ENCODE measurements at regions of chr2 and their contacts with region 1.

Region 1: DNA sequence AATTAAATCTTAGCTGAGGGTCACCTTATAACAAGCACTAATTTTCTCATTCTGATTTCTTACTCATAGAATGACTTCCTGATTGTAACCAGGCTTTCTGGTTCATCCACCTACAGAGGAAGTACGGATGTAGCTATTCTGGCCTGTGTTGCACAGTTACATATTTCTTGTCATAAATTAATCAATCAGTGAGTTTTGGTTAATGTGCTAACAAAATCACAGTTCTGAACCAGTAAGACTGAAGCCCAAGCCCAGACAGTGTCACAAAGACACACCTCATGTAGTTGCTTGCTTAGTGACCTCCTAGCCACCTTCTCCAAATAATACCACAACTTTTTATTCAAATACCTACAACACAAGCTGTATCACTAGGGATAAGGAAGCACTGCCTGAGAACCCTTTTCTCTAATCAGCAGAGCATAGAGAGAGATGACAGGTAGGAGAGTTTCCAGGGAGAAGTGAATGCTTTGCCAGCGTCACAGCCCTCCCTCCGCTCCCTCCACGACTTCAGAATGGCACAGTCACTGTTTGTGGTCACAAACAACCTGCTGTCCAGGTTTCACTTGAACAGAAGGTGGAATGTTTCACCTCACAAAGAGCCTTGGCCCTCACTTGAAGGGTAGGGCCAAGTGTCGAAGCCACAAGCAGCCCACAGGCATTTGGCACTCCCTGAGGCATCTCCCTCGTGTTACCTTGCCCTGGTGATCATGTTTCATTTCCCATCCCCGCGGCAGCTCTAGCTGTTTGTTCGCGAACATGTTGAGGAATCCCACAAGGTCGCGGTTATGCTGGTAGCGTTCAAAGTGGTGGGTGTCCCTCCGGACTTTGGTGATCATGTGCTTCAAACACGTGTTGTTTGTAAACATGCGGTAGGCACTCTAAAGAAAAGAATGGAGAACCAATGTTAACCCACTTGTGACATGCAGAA is 120.8 kb upstream of the STK17B start:
- DNase-seq: peak in 1 of 5 donors; percentile 53
- ATAC-seq: peak in 3 of 4 donors; percentile 45 to 76 (median 50)
- H3K4me3 ChIP-seq: no peak overlapping the region
- H3K27ac ChIP-seq: peak overlapping the region in 7 of 12 donors; percentile 31 to 79 (median 59)
- H3K4me1 ChIP-seq: peaks cover 0 to 58% (median 18%) of the 10 kb centered on the region in 12 donors
- H3K27me3 ChIP-seq: no peaks in the 10 kb centered on the region
- CTCF ChIP-seq: no peak
- POLR2A ChIP-seq: no peak

Region 2: DNA sequence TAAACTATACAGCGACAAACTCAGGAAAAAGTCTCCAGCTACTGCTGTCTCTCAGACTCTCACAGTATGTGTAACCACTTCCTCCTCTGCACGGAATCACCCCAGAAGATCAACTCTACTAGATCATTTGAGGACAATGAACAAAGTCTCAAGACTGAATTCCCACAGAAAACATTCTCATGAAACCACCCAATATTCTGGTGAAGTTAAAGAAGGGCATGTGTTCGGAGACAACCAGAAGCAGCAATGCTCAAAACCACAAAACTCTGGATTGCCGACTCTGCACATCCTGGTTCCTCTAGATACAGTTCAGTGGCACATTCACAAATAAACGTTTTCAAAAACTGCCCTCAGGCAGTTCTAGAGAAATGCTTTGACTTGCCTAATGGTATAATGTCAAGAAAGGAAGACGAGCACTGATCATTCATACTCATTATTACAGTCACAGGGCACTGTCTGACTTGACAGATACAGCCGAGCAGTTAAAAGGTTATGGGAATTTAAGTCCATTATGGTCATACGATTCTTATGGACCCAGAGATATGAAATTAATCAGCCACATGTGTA is 28.9 kb before region 1 on chr2:
- intact Hi-C with region 1: no loop called
- DNase-seq: no peak
- ATAC-seq: peak; percentile 52 to 82 (median 70)
- H3K4me3 ChIP-seq: no peak overlapping the region
- H3K27ac ChIP-seq: peak overlapping the region in 1 of 12 donors; percentile 83
- H3K4me1 ChIP-seq: peaks cover 0 to 67% (median 18%) of the 10 kb centered on the region in 12 donors
- H3K27me3 ChIP-seq: no peaks in the 10 kb centered on the region
- CTCF ChIP-seq: no peak
- POLR2A ChIP-seq: no peak

Region 3: DNA sequence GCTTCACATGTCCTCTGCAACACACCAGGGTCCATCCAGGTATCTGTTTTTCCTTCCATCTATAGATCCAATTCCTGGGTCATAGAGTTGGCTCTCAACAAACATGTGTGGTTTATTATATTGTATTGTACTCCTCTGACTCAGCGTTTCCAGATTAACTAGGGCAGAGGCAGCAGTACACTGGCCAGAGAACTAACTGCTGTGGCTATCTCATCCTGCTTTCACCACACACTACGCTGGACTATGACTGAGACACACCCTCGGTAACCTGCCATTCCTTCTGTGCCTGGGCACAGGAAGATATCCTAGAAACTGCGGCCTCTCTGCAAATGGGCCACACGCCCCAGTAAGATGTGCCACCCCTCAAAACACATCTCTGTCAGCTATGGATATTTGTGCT is 39.0 kb after region 1 on chr2:
- intact Hi-C with region 1: loop called in 6 of 10 experiments (anchors 5 kb)
- DNase-seq: peak in 4 of 5 donors; percentile 17 to 40 (median 32)
- ATAC-seq: peak; percentile 88 to 95 (median 94)
- H3K4me3 ChIP-seq: peak overlapping the region in 1 of 12 donors; percentile 4
- H3K27ac ChIP-seq: peak overlapping the region in 10 of 12 donors; percentile 22 to 73 (median 60)
- H3K4me1 ChIP-seq: peaks cover 4 to 76% (median 31%) of the 10 kb centered on the region in 12 donors
- H3K27me3 ChIP-seq: no peaks in the 10 kb centered on the region
- CTCF ChIP-seq: no peak
- POLR2A ChIP-seq: no peak

Region 4: GRCh38 chr2:196337208-196337953 is 45.2 kb after region 1 on chr2:
- intact Hi-C with region 1: loop called in 6 of 10 experiments (anchors 5 kb)
- DNase-seq: no peak
- ATAC-seq: peak in 1 of 4 donors; percentile 42
- H3K4me3 ChIP-seq: no peak overlapping the region
- H3K27ac ChIP-seq: no peak overlapping the region
- H3K4me1 ChIP-seq: peaks cover 0 to 50% (median 9%) of the 10 kb centered on the region in 12 donors
- H3K27me3 ChIP-seq: no peaks in the 10 kb centered on the region
- CTCF ChIP-seq: peak; percentile 17 to 62 (median 46)
- POLR2A ChIP-seq: no peak

Region 5: GRCh38 chr2:196361606-196362326 is 69.6 kb after region 1 on chr2:
- intact Hi-C with region 1: no loop called
- DNase-seq: peak in 3 of 5 donors; percentile 33 to 44 (median 33)
- ATAC-seq: peak; percentile 22 to 78 (median 76)
- H3K4me3 ChIP-seq: peak overlapping the region; percentile 6 to 58 (median 48)
- H3K27ac ChIP-seq: peak overlapping the region; percentile 19 to 76 (median 54)
- H3K4me1 ChIP-seq: peaks cover 0 to 34% (median 11%) of the 10 kb centered on the region in 12 donors
- H3K27me3 ChIP-seq: no peaks in the 10 kb centered on the region
- CTCF ChIP-seq: no peak
- POLR2A ChIP-seq: peak in 1 of 2 donors; percentile 28

Region 6: DNA sequence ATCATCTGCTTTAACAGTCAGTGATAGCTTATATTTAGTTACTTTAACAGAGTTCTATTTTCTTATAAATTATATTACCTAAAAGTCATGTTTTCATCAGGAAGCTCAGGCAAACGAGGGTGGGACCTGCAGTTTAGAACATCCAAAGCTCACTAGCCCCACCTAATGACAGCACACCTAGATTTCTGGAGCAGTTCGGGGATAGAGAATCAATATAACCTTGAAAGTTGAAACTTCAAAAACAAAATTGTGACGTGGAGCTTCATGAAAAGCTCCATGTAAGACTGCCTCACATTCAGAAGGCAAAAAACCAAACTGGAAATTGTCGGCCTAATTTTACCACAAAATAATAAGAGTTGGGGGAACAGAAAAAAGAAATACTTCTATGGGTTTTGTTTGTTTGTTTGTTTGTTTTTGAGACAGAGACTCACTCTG is 161.5 kb after region 1 on chr2:
- intact Hi-C with region 1: loop called in 6 of 10 experiments (anchors 2 to 5 kb)
- DNase-seq: peak in 3 of 5 donors; percentile 33 to 43 (median 42)
- ATAC-seq: peak; percentile 51 to 69 (median 58)
- H3K4me3 ChIP-seq: no peak overlapping the region
- H3K27ac ChIP-seq: peak overlapping the region in 1 of 12 donors; percentile 23
- H3K4me1 ChIP-seq: peaks cover 0 to 15% (median 0%) of the 10 kb centered on the region in 12 donors
- H3K27me3 ChIP-seq: peaks cover 0 to 8% (median 0%) of the 10 kb centered on the region in 9 donors
- CTCF ChIP-seq: peak; percentile 37 to 81 (median 68)
- POLR2A ChIP-seq: no peak

Region 7: DNA sequence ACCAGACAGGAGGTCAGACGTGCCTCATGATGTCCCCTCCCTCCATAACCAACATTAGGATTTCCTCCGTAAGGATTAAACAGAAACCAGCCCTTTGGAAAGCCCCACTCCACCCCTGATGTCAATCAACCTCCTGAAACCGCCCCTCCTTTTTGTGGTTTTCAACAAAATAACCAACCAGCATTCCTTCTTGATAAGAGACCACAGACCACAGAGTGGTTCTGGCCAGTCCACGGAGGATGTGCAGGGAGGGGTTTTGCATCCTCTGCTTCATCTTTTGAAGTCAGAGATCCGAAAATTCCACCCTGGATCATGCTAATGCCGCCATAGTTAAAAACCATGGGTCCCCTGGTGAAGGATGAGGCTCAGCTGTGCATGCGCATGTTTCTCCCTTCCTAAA is 167.4 kb after region 1 on chr2:
- intact Hi-C with region 1: loop called in 5 of 10 experiments (anchors 5 kb)
- DNase-seq: no peak
- ATAC-seq: no peak
- H3K4me3 ChIP-seq: no peak overlapping the region
- H3K27ac ChIP-seq: no peak overlapping the region
- H3K4me1 ChIP-seq: no peaks in the 10 kb centered on the region
- H3K27me3 ChIP-seq: peaks cover 0 to 8% (median 0%) of the 10 kb centered on the region in 9 donors
- CTCF ChIP-seq: no peak
- POLR2A ChIP-seq: no peak

Region 8: GRCh38 chr2:196750982-196751635 is 459.0 kb after region 1 on chr2:
- intact Hi-C with region 1: loop called in 6 of 10 experiments (anchors 5 to 10 kb)
- DNase-seq: peak in 4 of 5 donors; percentile 33 to 41 (median 37)
- ATAC-seq: peak in 3 of 4 donors; percentile 56 to 80 (median 71)
- H3K4me3 ChIP-seq: no peak overlapping the region
- H3K27ac ChIP-seq: no peak overlapping the region
- H3K4me1 ChIP-seq: peaks cover 0 to 3% (median 0%) of the 10 kb centered on the region in 12 donors
- H3K27me3 ChIP-seq: no peaks in the 10 kb centered on the region
- CTCF ChIP-seq: peak; percentile 59 to 89 (median 72)
- POLR2A ChIP-seq: no peak

Region 9: DNA sequence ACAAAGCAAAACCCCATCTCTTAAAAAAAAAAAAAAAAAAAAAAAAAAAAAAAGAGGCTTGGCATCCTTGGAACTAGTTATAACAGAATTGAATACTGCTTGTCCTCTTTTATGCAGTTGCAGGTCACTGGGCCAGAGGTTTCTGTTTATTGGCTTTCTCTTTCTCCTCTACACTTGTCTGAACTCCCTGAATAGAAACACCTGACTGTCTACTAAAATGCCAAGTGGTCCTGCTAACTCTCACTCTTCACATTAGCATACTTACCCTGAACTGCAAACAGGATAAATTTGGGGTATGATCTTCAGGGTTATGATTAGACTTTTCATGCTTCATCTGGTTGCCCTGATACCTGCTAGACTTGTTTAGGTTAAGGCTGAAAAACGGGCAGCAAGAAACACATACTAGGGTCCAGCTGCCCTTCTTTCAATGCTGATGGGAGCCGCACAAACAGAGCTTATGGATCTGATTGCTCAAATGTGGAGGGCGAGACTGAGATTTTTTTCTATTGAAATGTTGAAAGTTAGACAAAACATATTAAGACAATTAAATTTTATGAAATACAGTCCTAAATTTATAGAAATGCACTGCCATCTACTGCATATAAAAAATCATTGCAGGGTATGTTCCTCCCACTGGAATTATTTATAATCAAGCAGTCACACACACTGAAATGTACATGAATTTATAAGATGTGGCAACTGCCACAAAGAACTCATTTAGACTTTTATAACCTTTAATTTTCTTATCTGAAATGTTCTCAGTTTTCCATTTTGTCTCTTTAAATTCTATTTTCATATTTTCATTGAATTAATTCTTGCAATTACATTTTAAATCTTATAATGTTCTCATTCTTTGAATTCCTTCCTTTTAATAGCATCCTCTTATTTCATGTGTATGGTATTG is 466.6 kb after region 1 on chr2:
- intact Hi-C with region 1: loop called in 7 of 10 experiments (anchors 5 to 10 kb)
- DNase-seq: no peak
- ATAC-seq: peak in 3 of 4 donors; percentile 57 to 81 (median 58)
- H3K4me3 ChIP-seq: no peak overlapping the region
- H3K27ac ChIP-seq: no peak overlapping the region
- H3K4me1 ChIP-seq: peaks cover 0 to 11% (median 0%) of the 10 kb centered on the region in 12 donors
- H3K27me3 ChIP-seq: no peaks in the 10 kb centered on the region
- CTCF ChIP-seq: peak in 11 of 12 donors; percentile 26 to 57 (median 40)
- POLR2A ChIP-seq: no peak

Region 10: DNA sequence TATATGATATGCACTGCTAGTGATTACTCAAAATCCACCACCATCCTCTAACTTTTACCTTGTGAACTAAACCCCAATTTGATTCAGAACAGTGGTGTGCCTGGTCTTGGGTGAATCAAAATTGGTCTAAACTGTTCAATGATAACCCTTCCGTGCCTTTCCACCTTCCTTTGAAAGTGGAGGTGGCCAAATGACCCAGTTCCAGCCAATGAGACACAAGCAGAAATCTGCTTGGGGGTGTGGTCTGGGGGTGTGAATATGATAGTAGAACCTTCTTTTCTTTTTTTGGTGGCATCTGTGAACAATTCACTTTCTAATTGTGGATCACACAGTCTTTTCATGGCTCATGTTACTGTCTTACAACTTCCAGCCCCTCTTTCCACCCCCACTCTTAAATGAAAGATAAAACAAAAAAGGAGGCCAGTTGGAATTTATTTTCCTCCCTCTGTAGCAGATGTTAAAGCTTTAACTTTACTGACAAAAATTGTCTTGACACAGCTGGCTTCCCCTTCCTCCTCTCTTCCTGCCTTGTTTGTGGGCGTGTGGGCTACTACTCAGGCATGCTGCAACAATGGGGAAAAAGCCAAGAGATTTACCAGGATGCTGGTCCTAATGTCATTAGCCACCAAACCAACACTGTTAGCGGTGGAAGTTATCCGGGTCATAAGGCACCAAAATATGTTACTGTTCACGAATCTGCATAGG is 1077.2 kb after region 1 on chr2:
- intact Hi-C with region 1: no loop called
- DNase-seq: no peak
- ATAC-seq: peak in 1 of 4 donors; percentile 41
- H3K4me3 ChIP-seq: no peak overlapping the region
- H3K27ac ChIP-seq: no peak overlapping the region
- H3K4me1 ChIP-seq: peaks cover 0 to 15% (median 0%) of the 10 kb centered on the region in 12 donors
- H3K27me3 ChIP-seq: no peaks in the 10 kb centered on the region
- CTCF ChIP-seq: no peak
- POLR2A ChIP-seq: no peak